Panc1 (cell line): ENCODE measurements at regions of chr4 and their contacts with region 1.

Region 1: GRCh38 chr4:150078637-150079581 is 664 bp downstream of the DCLK2 start:
- DNase-seq: no peak
- ATAC-seq: peak; percentile 85
- H3K4me3 ChIP-seq: peak overlapping the region; percentile 74 to 78
- H3K27ac ChIP-seq: peak overlapping the region; percentile 65
- H3K4me1 ChIP-seq: peaks cover 25% of the 10 kb centered on the region
- H3K27me3 ChIP-seq: no peaks in the 10 kb centered on the region
- CTCF ChIP-seq: peak; percentile 11

Region 2: DNA sequence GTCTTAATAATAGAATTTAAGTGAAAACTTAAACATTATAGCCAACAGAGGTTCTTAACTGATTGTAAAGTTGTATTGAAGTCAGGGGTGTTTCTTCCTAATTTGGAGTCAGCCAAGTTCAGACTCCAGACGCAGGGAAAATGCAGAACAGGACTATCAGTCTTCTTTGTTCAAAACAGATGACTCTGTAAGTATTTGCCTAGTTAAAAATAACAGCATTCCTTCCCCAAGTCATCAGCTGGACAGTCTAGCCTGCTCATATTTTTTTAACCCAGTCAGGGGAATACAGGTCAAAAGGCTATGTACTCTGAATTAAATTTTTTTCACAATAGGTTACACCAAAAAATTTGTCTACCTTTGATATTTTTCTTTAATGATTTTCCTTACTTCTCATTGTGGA is 74.4 kb before region 1 on chr4:
- CTCF ChIA-PET with region 1: no interaction called
- POLR2A ChIA-PET with region 1: no interaction called
- in situ Hi-C with region 1: no loop called
- intact Hi-C with region 1: no loop called
- DNase-seq: no peak
- ATAC-seq: no peak
- H3K4me3 ChIP-seq: no peak overlapping the region
- H3K27ac ChIP-seq: no peak overlapping the region
- H3K4me1 ChIP-seq: peaks cover 7% of the 10 kb centered on the region; the same call in 1 of the 2 replicates
- H3K27me3 ChIP-seq: no peaks in the 10 kb centered on the region
- CTCF ChIP-seq: no peak

Region 3: DNA sequence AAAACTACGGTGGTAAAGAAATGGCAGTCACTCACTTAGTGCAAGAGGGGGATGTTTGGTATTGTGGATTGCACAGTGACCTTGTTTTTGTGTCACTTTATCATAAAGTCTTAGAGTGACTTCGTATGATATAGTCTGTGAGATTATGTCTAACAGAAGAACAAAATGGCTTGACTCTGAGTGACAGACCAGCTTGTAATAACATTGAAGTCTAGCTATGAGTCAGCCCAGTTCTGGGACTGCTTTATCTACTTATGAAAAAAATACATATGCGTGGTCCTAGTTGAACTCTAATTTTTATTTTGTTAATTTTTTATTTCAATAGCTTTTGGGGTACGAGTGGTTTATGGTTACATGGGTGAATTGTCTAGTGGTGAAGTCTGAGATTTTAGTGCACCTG is 19.3 kb after region 1 on chr4:
- CTCF ChIA-PET with region 1: no interaction called
- POLR2A ChIA-PET with region 1: interaction called, 14 read pairs
- in situ Hi-C with region 1: no loop called
- intact Hi-C with region 1: no loop called
- DNase-seq: no peak
- ATAC-seq: 0 out of 2 replicates have a peak, but pooled peaks have one; percentile 45
- H3K4me3 ChIP-seq: no peak overlapping the region
- H3K27ac ChIP-seq: no peak overlapping the region
- H3K4me1 ChIP-seq: no peaks in the 10 kb centered on the region; the same call in 1 of the 2 replicates
- H3K27me3 ChIP-seq: no peaks in the 10 kb centered on the region
- CTCF ChIP-seq: no peak

Region 4: GRCh38 chr4:150192986-150193385 is 114.1 kb after region 1 on chr4:
- CTCF ChIA-PET with region 1: no interaction called
- POLR2A ChIA-PET with region 1: no interaction called
- in situ Hi-C with region 1: no loop called
- intact Hi-C with region 1: no loop called
- DNase-seq: no peak
- ATAC-seq: no peak
- H3K4me3 ChIP-seq: no peak overlapping the region
- H3K27ac ChIP-seq: no peak overlapping the region
- H3K4me1 ChIP-seq: no peaks in the 10 kb centered on the region
- H3K27me3 ChIP-seq: no peaks in the 10 kb centered on the region
- CTCF ChIP-seq: no peak